HEK293T (cell line): ENCODE measurements at regions of chr7 and their contacts with region 1.

Region 1: DNA sequence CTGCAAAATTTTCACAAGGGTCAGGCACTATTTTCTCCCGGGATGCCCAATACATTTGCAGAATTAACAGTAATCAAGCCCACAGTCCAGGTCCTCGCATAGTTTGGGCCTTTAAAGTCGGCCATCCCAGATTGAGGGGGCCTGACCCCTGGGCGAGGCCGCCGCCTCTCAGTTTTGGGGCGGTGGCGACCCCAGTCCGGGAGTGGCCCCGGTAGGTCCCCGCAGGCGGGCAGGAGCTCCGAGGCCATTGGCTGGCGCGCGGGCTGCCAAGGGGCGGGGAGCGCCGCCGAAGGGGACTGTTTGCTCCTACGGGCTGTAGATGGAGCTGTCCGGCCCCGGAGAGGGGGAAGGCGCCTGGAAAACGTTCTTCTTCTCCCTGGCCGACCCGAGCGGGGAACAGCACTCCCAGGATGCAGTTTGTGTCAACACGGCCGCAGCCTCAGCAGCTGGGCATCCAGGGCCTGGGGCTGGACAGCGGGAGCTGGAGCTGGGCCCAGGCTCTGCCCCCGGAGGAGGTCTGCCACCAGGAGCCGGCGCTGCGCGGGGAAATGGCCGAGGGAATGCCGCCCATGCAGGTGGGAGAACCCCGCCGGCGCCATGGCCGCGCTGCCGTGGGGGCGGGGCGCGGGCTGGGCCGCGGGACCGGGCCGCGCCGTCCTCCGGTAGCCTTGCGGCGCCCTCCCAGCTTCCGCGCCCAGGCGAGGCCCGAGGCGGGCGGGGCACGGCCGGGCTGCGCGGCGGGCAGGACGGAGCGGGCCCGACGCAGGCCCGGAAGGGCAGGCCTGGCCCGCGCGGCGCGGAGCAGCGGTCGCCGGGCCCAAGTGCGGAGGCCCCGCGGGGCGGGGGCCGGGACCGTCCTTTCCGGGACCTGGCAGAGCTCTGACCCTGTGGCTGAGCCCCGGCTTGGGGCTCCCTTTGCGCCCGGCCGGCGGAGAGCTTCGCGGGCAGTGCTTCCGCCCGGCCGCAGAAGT is at the start of gene ZNF282:
- DNase-seq: peak; percentile 99

Region 2: DNA sequence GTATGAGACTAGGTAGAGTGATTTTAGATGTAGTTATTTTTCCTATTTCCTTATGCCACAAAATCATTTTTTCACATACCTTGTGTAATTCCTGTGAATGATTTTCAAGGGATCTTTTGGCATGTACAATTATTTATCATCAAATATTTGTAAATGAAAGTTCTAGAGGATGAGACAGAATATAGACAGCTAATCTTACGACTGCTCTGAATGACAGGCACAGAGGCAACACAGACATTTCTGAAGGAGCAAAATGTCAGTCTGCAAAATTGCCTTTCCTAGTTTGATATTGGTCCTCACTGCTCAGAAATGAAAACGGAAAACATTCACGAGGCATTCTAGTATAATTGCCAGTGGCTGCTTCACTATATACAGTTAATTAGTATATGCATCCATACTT is 1415.5 kb before region 1 on chr7:
- CTCF ChIA-PET with region 1: no interaction called
- POLR2A ChIA-PET with region 1: no interaction called
- DNase-seq: no peak

Region 3: GRCh38 chr7:149125863-149126661 is 69.4 kb before region 1 on chr7 and contains the start of gene ZNF425:
- CTCF ChIA-PET with region 1: no interaction called
- POLR2A ChIA-PET with region 1: interaction called, 23 read pairs
- DNase-seq: peak; percentile 98

Region 4: DNA sequence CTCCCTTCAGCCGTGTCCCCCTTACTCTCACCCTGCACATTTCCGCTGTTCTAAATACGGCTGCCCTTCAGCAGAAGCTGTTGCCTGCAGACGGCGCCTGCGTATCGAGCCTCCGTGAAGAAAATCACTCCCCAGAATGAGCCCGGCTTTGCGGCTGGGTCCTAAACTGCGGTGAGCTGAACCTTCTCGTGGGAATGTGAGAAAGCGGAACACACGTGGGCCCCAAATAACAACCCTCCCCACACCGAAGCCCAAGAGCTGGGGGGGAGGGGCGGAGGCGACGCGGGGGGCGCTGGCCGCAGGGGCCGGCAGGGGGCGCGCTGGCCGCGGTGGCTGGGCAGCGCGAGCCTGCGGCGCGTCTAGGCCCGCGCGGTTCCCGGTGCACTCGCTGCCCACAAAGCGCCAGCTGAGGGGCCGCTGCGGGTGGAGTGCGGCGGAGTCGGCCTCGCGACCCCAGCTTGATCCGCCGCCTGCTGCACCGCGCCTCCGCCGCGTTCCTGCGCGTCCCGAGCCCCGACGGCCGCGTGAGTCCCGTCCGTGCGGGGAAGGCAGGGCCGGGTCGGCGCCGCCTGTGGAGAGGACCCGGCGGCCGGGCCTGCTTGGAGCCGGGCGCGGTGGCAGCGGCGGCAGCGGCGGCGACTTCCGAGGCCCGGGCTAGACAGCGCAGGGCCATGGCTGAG is 48.3 kb before region 1 on chr7 and contains the start of gene ZNF398:
- CTCF ChIA-PET with region 1: interaction called, 9 read pairs
- POLR2A ChIA-PET with region 1: interaction called, 35 read pairs
- DNase-seq: peak; percentile 97

Region 5: GRCh38 chr7:149180722-149181449 is 14.6 kb before region 1 on chr7:
- CTCF ChIA-PET with region 1: interaction called, 4 read pairs
- POLR2A ChIA-PET with region 1: interaction called, 11 read pairs
- DNase-seq: no peak

Region 6: DNA sequence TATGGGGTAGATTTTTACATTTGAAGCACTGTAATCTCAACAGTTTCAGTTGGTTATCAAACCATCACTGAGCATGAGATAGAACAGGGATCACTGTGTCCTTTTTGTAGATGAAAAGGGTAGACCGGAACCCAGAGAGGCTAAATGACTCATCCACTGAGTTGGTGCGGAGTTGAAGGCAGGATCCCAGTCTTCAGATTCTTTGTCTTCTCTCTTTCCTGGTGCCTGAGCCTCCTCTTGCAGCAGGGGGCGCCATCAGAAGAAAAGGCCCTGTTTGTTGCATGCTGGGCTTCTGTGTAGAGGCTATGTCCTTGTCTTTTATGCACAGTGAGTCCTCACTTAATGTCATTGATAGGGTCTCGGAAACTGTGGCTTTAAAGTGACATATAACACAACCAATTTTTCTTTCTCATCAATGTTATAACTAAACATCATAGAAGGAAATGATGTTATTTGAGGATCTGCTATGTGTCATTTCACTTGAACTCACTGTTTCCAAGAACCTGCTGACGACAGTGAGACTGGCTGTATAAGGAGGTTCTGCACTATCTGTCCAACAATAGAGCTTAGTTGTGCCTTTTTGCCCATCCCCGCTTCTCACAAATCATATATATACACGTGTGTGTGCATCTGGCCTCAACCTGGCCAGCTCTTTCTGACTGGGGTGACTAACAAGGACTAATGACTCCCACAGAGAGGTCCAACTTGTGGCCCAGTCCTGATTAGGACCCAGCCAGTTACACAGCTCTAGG is 14.2 kb after region 1 on chr7:
- CTCF ChIA-PET with region 1: interaction called, 3 read pairs
- POLR2A ChIA-PET with region 1: interaction called, 15 read pairs
- DNase-seq: peak; percentile 87